ENCODE measurements at regions of chr19 and their contacts with region 1.

Region 1: GRCh38 chr19:53254411-53255341 is at the start of gene ZNF677:
- DNase-seq: peak; percentile 85 to 87
- ATAC-seq: peak; percentile 99 to 100 (median 100)
- H3K4me3 ChIP-seq: peak within 1 kb of the TSS; percentile 71
- H3K4me3 Mint-ChIP-seq: peak within 1 kb of the TSS; percentile 76
- H3K27ac ChIP-seq: peak within 1 kb of the TSS; percentile 76
- H3K27ac Mint-ChIP-seq: peak within 1 kb of the TSS; percentile 63 to 89
- H3K4me1 ChIP-seq: peaks cover 11% of the 10 kb centered on the region
- H3K4me1 Mint-ChIP-seq: peaks cover 11% of the 10 kb centered on the region in 2 donors
- H3K27me3 ChIP-seq: no peaks in the 10 kb centered on the region
- H3K27me3 Mint-ChIP-seq: peaks cover 8 to 11% of the 10 kb centered on the region in 2 donors
- CTCF ChIP-seq: no peak
- total RNA-seq, gene ZNF677: 16.4 to 19.8 (median 18.4) TPM

Region 2: GRCh38 chr19:53333463-53334449 is 79.1 kb after region 1 on chr19 and contains the start of gene ZNF845:
- intact Hi-C with region 1: loop called (anchors 2 kb)
- DNase-seq: peak; percentile 95 to 99
- ATAC-seq: peak; percentile 98 to 100 (median 98)
- H3K4me3 ChIP-seq: peak within 1 kb of the TSS; percentile 88
- H3K4me3 Mint-ChIP-seq: peak within 1 kb of the TSS; percentile 95
- H3K27ac ChIP-seq: peak within 1 kb of the TSS; percentile 62
- H3K27ac Mint-ChIP-seq: peak within 1 kb of the TSS; percentile 70 to 90
- H3K4me1 ChIP-seq: peaks cover 23% of the 10 kb centered on the region
- H3K4me1 Mint-ChIP-seq: peaks cover 15 to 25% of the 10 kb centered on the region in 2 donors
- H3K27me3 ChIP-seq: no peaks in the 10 kb centered on the region
- H3K27me3 Mint-ChIP-seq: peaks cover 9 to 16% of the 10 kb centered on the region in 2 donors
- CTCF ChIP-seq: no peak
- total RNA-seq, gene ZNF845: 8.7 to 13.2 (median 9.0) TPM